ENCODE measurements at regions of chr12 and their contacts with region 1.

Region 1: DNA sequence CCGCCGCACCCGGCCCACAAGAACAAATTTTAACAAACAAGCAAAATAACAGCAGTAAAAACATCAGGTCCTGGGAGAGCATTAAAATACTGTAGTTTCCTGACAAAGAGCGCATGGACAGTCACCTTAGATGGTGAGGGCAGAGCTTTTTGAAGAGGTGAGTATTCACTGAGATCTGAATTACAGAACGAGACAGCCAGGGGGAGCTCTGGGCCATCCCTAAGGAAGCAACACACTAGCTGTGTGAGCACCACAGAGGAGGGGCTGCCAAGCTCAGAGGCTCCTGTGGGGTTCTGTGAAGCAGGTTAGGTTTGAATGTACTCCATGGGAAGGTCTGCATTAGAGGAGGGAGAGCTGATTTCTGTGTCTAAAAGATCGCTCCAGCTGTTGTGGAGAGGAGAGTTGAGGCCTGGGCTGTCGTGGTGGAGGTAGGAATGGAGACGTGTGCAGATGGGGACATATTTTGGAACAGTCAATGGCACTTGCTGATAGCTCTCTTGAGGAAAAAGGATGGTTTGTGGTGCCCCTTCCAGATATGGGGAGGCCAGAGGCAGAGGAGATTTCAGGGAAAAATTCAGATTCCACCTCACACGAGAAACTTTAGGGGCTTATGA is 72.9 kb downstream of the TRAFD1 start:
- DNase-seq: peak; percentile 30
- H3K4me3 Mint-ChIP-seq: no peak overlapping the region
- H3K27ac Mint-ChIP-seq: no peak overlapping the region
- H3K4me1 Mint-ChIP-seq: peaks cover 4% of the 10 kb centered on the region
- H3K27me3 Mint-ChIP-seq: no peaks in the 10 kb centered on the region

Region 2: DNA sequence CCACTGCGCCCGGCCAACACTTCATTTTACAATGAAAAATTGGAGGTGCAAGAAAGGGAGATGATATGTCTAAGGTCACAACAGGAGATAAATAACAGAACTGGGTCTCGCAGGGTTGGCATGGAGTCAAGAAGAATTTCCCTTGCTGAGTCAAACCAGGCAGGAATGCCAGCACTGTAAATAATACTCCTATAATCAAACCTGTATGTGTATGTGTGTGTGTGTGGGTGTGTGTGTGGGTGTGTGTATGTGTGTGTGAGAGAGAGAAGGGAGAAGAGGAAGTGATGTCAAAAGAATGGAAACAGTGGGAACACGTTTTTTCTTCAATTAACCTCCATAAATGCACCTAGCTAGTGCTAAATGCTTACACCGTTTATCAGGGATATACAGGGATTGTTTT is 255.7 kb before region 1 on chr12:
- intact Hi-C with region 1: loop called (anchors 10 kb)
- DNase-seq: no peak
- H3K4me3 Mint-ChIP-seq: no peak overlapping the region
- H3K27ac Mint-ChIP-seq: no peak overlapping the region
- H3K4me1 Mint-ChIP-seq: peaks cover 11% of the 10 kb centered on the region
- H3K27me3 Mint-ChIP-seq: no peaks in the 10 kb centered on the region

Measured in activated T-helper 2 cell treated with anti-CD3 and anti-CD28 coated beads, Interferon-gamma antibody, Interleukin-2, Interleukin-4, amounts not matched to agents 10 μg/mL and 5 μg/mL and 100 μg/mL, durations not matched to agents 14 hours and 24 hours and 36 hours (primary cell).